ENCODE measurements at regions of chr5 and their contacts with region 1.

Region 1: DNA sequence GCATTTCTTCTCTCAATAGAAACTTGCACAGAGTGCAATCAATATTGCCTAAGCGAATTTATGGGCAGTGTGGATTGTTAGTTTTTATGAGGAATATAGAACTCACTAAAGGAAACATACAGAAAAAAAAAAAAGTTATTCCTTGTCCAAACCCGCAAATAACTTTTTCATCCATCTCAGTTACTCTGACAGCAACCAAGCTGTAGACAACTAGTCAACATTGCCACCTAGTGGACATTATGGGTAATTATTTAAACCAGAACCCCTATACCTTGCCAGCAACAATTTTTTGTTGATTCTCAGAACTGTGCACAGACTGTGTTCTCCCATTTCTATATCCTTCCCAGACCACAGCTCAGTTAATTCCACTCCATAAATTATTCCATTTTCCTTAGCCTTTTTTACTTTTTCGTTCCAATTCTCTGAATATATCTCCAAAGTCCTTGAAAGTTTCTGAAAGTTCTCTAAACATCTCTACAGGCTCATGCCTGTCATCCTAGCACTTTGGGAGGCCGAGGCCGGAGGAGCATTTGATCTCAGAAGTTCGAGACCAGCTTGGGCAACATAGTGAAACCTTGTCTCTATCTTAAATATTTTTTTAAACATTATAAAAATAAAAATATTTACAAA is 2.6 kb upstream of the AFAP1L1 start:
- DNase-seq: peak in 1 of 2 experiments; percentile 72
- H3K4me3 ChIP-seq: no peak overlapping the region
- H3K27ac ChIP-seq: no peak overlapping the region
- H3K4me1 ChIP-seq: peaks cover 13% of the 10 kb centered on the region
- H3K27me3 ChIP-seq: no peaks in the 10 kb centered on the region
- CTCF ChIP-seq: peak; percentile 91

Region 2: DNA sequence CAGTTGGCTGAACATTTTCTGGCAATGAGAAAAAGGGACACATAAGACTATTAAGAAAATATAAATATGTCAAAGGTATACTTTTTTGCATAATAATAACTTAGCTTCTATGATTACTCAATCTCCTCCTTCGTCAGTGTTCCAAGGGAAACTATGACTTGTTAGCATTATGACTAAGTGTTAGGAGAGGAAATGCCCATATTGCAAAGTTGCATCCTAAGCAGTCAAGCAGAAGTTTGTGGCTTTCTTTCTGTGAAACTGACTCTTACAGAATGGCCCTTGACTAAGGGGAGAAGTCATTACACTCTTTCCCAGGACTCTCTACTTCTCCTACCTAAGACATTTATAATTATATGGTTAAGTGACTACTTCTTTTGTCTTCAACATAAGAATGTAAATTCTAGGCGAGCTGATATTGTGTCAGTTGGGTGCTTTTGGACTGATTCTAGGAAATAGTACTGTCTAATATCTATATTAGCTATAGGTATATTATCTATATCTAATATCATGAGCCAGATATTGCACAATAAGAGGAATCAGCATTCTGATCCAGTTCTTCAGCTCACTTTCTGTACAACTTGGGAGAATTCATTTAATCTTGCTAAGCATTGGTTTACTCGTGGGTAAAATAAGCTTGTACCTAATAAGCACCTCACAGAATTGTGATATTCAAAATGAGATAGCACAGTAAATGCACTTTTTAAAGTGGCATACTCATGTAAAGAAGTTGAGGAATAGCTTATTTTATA is 1082.6 kb before region 1 on chr5:
- CTCF ChIA-PET with region 1: no interaction called
- POLR2A ChIA-PET with region 1: no interaction called
- intact Hi-C with region 1: loop called (anchors 10 kb)
- DNase-seq: peak in 1 of 2 experiments; percentile 75
- H3K4me3 ChIP-seq: no peak overlapping the region
- H3K27ac ChIP-seq: peak overlapping the region; percentile 69
- H3K4me1 ChIP-seq: peaks cover 18% of the 10 kb centered on the region; the same call in 1 of the 2 replicates
- H3K27me3 ChIP-seq: no peaks in the 10 kb centered on the region
- CTCF ChIP-seq: no peak

Region 3: DNA sequence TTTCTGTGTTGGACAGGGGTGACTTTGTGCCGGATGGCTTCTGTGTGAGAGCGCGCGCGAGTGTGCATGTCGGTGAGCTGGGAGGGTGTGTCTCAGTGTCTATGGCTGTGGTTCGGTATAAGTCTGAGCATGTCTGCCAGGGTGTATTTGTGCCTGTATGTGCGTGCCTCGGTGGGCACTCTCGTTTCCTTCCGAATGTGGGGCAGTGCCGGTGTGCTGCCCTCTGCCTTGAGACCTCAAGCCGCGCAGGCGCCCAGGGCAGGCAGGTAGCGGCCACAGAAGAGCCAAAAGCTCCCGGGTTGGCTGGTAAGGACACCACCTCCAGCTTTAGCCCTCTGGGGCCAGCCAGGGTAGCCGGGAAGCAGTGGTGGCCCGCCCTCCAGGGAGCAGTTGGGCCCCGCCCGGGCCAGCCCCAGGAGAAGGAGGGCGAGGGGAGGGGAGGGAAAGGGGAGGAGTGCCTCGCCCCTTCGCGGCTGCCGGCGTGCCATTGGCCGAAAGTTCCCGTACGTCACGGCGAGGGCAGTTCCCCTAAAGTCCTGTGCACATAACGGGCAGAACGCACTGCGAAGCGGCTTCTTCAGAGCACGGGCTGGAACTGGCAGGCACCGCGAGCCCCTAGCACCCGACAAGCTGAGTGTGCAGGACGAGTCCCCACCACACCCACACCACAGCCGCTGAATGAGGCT is 442.8 kb before region 1 on chr5 and contains the start of gene ADRB2:
- CTCF ChIA-PET with region 1: interaction called, 3 read pairs
- POLR2A ChIA-PET with region 1: no interaction called
- intact Hi-C with region 1: loop called (anchors 5 kb)
- DNase-seq: peak; percentile 90 to 98
- H3K4me3 ChIP-seq: peak within 1 kb of the TSS; percentile 63
- H3K27ac ChIP-seq: peak within 1 kb of the TSS; percentile 68
- H3K4me1 ChIP-seq: peaks cover 24% of the 10 kb centered on the region
- H3K27me3 ChIP-seq: no peaks in the 10 kb centered on the region
- CTCF ChIP-seq: no peak
- total RNA-seq, gene ADRB2: 2.8 and 3.1 TPM in 2 replicates

Region 4: GRCh38 chr5:149035372-149035790 is 233.7 kb before region 1 on chr5:
- CTCF ChIA-PET with region 1: interaction called, 4 read pairs
- POLR2A ChIA-PET with region 1: interaction called, 3 read pairs
- intact Hi-C with region 1: loop called (anchors 2 kb)
- DNase-seq: peak; percentile 66 to 79
- H3K4me3 ChIP-seq: no peak overlapping the region
- H3K27ac ChIP-seq: peak overlapping the region; percentile 1; the same call in 1 of the 2 replicates
- H3K4me1 ChIP-seq: peaks cover 58% of the 10 kb centered on the region
- H3K27me3 ChIP-seq: no peaks in the 10 kb centered on the region
- CTCF ChIP-seq: peak; percentile 90

Region 5: DNA sequence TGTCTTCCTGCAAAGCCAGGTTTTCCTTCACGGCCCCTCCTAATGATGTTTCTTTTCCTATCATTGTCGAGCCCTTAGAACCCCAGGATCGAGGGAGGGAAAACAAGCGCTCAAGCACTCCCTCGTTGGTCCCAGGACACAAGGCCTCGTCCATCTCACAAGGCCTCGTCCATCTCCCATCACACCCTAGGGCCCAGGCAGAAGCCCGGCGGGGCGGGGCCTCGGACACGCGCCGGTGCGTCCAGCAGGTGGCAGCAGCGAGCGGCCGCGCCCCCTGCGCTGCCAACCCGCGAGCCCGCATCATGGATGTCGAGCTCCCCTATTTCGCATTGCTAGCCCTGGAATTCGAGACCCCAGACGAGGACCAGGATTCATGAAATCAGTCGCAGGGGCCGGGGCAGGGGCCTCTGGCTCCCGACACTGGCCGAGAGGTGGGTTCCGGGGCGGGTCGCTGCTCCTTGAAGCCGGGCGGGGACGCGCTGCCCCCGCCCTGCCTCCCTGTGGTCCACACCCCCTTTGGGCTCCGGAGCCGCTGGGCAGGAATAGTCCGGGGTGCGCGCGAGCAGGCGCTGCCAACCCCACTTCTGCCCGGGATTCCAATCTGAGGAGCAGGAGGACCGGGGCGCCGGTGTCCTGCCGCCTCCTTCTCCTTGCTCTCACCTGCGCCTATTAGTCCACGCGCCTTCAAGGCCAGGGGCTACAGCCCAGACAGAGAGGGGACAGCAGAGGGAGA is 127.7 kb before region 1 on chr5 and contains the start of gene ABLIM3:
- CTCF ChIA-PET with region 1: no interaction called
- POLR2A ChIA-PET with region 1: no interaction called
- intact Hi-C with region 1: loop called (anchors 2 kb)
- DNase-seq: peak; percentile 54 to 91
- H3K4me3 ChIP-seq: peak within 1 kb of the TSS; percentile 97
- H3K27ac ChIP-seq: peak within 1 kb of the TSS; percentile 91
- H3K4me1 ChIP-seq: peaks cover 61% of the 10 kb centered on the region
- H3K27me3 ChIP-seq: no peaks in the 10 kb centered on the region
- CTCF ChIP-seq: peak; percentile 90
- total RNA-seq, gene ABLIM3: 101 and 111 TPM in 2 replicates

Region 6: DNA sequence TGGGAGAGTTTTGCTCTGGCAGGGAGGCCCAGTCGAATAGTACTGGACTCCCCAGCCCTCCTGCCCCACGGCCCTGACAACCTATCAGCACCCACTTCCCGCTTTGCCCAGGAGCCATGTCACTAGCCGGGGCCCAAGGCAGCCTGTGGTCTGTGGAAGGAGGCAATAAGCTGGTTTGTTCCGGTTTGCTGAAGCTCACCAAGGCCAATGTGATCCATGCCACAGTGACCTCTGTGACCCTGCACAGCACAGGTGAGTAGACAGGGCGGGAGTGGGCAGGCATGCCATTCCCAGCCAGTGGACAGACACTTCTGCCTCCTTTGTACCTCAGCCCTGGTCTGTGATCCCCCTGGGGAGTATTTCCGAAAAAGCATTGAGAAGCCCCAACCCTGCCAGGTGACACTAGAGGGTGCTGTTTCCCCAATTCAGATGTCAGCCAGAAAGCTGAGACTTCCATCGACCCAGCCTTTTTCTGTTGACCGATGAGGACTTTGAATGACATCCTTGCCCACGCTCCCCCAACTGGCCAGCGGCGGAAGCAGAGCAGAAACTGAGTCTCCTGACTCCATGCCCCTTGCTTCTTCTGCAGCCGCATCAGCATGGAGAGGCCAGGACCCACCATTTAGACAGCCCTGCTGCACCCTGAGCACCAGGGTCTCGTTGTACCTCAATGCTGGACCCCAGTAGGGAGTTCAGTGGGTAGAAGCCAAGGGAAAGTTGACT is 98.4 kb after region 1 on chr5:
- CTCF ChIA-PET with region 1: interaction called, 4 read pairs
- POLR2A ChIA-PET with region 1: no interaction called
- intact Hi-C with region 1: loop called (anchors 5 kb)
- DNase-seq: peak; percentile 64 to 76
- H3K4me3 ChIP-seq: no peak overlapping the region
- H3K27ac ChIP-seq: no peak overlapping the region
- H3K4me1 ChIP-seq: no peaks in the 10 kb centered on the region
- H3K27me3 ChIP-seq: no peaks in the 10 kb centered on the region
- CTCF ChIP-seq: peak; percentile 84

Region 7: DNA sequence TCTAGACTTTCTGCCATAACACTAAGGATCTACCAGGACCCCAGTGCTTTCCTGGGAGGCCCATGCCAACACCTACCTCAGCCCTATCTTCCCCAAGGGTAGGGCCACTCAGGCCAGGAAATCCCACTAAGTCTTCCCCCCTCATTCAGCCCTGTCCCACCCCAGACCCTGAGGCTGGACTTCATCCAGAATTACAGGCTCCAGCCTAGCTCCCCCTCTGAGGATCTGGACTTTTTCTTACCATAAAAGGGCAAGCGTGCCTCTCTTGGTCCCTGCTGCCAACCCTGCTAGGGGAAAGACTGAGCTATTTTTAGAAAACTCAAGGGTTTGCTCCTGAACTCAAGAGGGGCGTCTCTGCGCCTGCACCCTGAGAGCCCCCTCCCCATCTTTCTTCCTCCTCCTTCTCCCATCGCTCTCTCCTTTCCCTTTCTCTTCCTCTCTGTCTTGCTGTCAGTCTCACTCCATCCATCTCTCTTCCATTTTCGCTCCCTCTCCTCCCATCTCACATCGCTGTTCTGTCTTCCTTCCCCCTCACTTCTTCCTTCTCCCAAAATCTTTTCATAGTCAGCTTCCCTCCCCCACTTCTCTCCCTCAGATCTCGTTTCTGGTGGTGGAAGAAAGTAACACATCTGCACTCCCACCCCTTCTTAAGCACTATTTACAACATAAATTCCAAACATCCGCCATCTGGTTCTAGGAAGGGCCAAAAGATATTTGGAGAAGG is 148.1 kb after region 1 on chr5:
- CTCF ChIA-PET with region 1: no interaction called
- POLR2A ChIA-PET with region 1: no interaction called
- intact Hi-C with region 1: no loop called
- DNase-seq: no peak
- H3K4me3 ChIP-seq: no peak overlapping the region
- H3K27ac ChIP-seq: no peak overlapping the region
- H3K4me1 ChIP-seq: no peaks in the 10 kb centered on the region
- H3K27me3 ChIP-seq: peaks cover 7% of the 10 kb centered on the region; the same call in 1 of the 2 replicates
- CTCF ChIP-seq: no peak

Region 8: DNA sequence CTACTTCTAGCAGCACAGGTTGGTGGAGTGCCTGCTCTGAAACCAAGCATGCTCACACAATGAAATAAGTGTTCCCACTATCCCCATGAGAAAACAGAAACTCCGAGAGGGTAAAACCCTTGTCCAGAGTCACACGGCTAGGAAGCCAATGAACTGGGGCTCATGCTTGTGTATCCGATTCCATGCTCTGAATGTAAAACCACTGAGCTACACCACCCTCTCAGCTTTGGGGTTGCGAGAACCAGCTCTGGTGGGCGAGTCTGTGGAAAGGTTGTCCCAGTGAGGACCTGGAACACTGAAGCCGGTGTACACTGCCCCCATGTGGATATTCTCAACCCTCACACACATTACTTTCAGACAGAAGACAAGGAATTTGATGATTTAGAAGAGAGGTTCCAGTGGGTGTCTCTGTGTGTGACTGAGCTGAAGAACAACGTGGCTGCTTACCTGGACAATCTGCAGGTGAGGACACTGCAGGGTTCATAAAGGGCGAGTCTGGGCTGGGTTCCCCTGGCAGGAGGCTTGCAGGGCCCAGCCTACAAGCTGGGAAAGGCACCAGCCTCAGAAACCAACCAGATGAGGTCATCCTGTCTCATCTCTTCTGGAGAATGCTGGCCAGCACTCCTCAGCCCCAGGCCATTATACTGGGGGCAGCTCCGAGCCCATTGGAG is 349.7 kb after region 1 on chr5:
- CTCF ChIA-PET with region 1: no interaction called
- POLR2A ChIA-PET with region 1: no interaction called
- intact Hi-C with region 1: loop called (anchors 5 kb)
- DNase-seq: peak; percentile 75 to 77
- H3K4me3 ChIP-seq: no peak overlapping the region
- H3K27ac ChIP-seq: peak overlapping the region; percentile 54
- H3K4me1 ChIP-seq: peaks cover 33% of the 10 kb centered on the region
- H3K27me3 ChIP-seq: no peaks in the 10 kb centered on the region
- CTCF ChIP-seq: peak; percentile 87